ENCODE measurements at regions of chr3 and their contacts with region 1.

Region 1: GRCh38 chr3:145229652-145230051 is 931.3 kb downstream of the PLOD2 start:
- DNase-seq: no peak
- ATAC-seq: no peak
- H3K4me3 ChIP-seq: no peak overlapping the region
- H3K27ac ChIP-seq: no peak overlapping the region
- H3K4me1 ChIP-seq: no peaks in the 10 kb centered on the region
- H3K27me3 ChIP-seq: no peaks in the 10 kb centered on the region
- CTCF ChIP-seq: no peak

Region 2: GRCh38 chr3:144989807-144990206 is 239.8 kb before region 1 on chr3:
- CTCF ChIA-PET with region 1: interaction called, 10 read pairs
- POLR2A ChIA-PET with region 1: no interaction called
- in situ Hi-C with region 1: no loop called
- intact Hi-C with region 1: no loop called
- DNase-seq: no peak
- ATAC-seq: no peak
- H3K4me3 ChIP-seq: no peak overlapping the region
- H3K27ac ChIP-seq: no peak overlapping the region
- H3K4me1 ChIP-seq: no peaks in the 10 kb centered on the region
- H3K27me3 ChIP-seq: no peaks in the 10 kb centered on the region
- CTCF ChIP-seq: no peak

Measured in Panc1 (cell line).